ENCODE measurements at regions of chr1 and their contacts with region 1.

Region 1: DNA sequence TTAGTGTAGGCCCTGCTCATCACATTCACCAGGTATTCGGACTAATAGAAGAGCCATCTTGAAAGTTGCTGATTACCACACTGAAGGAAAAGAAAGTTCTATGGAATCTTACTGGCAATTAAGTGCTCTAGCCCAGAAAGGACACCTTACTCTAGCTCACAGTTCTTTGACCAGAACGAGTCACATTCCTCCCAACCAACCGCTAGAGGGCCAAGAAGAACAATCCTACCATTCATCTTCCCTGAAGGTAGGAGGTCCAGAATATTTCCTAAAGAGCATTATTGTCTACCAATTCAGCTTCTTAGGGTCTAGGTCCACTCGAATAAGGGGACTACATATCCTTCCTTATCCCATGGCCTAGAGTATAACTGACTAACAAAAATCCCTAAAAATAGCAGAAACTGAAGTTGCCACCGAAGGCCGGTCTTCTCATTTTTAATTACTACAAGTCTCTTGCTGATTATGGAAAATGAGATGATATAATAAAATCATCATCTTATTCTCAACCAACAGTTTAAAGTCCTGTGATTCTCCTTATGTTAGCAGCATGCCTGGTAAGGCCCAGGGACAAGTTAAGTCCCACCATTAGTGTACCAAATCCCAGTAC is 2.7 kb upstream of the FMO1 start:
- DNase-seq: peak; percentile 34
- H3K4me3 ChIP-seq: no peak overlapping the region
- H3K27ac ChIP-seq: no peak overlapping the region
- H3K4me1 ChIP-seq: no peaks in the 10 kb centered on the region
- H3K27me3 ChIP-seq: peaks cover 5 to 6% of the 10 kb centered on the region in 2 experiments
- CTCF ChIP-seq: peak; percentile 61 to 74
- POLR2A ChIP-seq: no peak

Region 2: GRCh38 chr1:170321113-170321512 is 924.4 kb before region 1 on chr1:
- CTCF ChIA-PET with region 1: no interaction called
- POLR2A ChIA-PET with region 1: no interaction called
- dilution Hi-C with region 1: no loop called
- intact Hi-C with region 1: no loop called
- DNase-seq: no peak
- H3K4me3 ChIP-seq: no peak overlapping the region
- H3K27ac ChIP-seq: no peak overlapping the region
- H3K4me1 ChIP-seq: no peaks in the 10 kb centered on the region
- H3K27me3 ChIP-seq: no peaks in the 10 kb centered on the region
- CTCF ChIP-seq: no peak
- POLR2A ChIP-seq: no peak

Region 3: GRCh38 chr1:171233190-171233589 is 12.4 kb before region 1 on chr1:
- CTCF ChIA-PET with region 1: interaction called, 20 read pairs
- POLR2A ChIA-PET with region 1: no interaction called
- dilution Hi-C with region 1: no loop called
- intact Hi-C with region 1: no loop called
- DNase-seq: no peak
- H3K4me3 ChIP-seq: no peak overlapping the region
- H3K27ac ChIP-seq: no peak overlapping the region
- H3K4me1 ChIP-seq: no peaks in the 10 kb centered on the region
- H3K27me3 ChIP-seq: no peaks in the 10 kb centered on the region
- CTCF ChIP-seq: no peak
- POLR2A ChIP-seq: no peak

Region 4: GRCh38 chr1:171256940-171257606 is 11.5 kb after region 1 on chr1:
- CTCF ChIA-PET with region 1: interaction called, 19 read pairs
- POLR2A ChIA-PET with region 1: no interaction called
- dilution Hi-C with region 1: no loop called
- intact Hi-C with region 1: no loop called
- DNase-seq: no peak
- H3K4me3 ChIP-seq: no peak overlapping the region
- H3K27ac ChIP-seq: no peak overlapping the region
- H3K4me1 ChIP-seq: no peaks in the 10 kb centered on the region
- H3K27me3 ChIP-seq: peaks cover 0 to 3% of the 10 kb centered on the region in 2 experiments
- CTCF ChIP-seq: no peak
- POLR2A ChIP-seq: no peak

Region 5: GRCh38 chr1:171403371-171403770 is 157.8 kb after region 1 on chr1:
- CTCF ChIA-PET with region 1: interaction called, 3 read pairs
- POLR2A ChIA-PET with region 1: no interaction called
- dilution Hi-C with region 1: no loop called
- intact Hi-C with region 1: loop called (anchors 10 kb)
- DNase-seq: no peak
- H3K4me3 ChIP-seq: no peak overlapping the region
- H3K27ac ChIP-seq: no peak overlapping the region
- H3K4me1 ChIP-seq: no peaks in the 10 kb centered on the region
- H3K27me3 ChIP-seq: no peaks in the 10 kb centered on the region
- CTCF ChIP-seq: no peak
- POLR2A ChIP-seq: no peak

Region 6: GRCh38 chr1:172229942-172230341 is 984.4 kb after region 1 on chr1:
- CTCF ChIA-PET with region 1: no interaction called
- POLR2A ChIA-PET with region 1: no interaction called
- dilution Hi-C with region 1: no loop called
- intact Hi-C with region 1: no loop called
- DNase-seq: no peak
- H3K4me3 ChIP-seq: no peak overlapping the region
- H3K27ac ChIP-seq: no peak overlapping the region
- H3K4me1 ChIP-seq: no peaks in the 10 kb centered on the region
- H3K27me3 ChIP-seq: no peaks in the 10 kb centered on the region
- CTCF ChIP-seq: no peak
- POLR2A ChIP-seq: no peak